ENCODE measurements at regions of chr11 and their contacts with region 1.

Region 1: DNA sequence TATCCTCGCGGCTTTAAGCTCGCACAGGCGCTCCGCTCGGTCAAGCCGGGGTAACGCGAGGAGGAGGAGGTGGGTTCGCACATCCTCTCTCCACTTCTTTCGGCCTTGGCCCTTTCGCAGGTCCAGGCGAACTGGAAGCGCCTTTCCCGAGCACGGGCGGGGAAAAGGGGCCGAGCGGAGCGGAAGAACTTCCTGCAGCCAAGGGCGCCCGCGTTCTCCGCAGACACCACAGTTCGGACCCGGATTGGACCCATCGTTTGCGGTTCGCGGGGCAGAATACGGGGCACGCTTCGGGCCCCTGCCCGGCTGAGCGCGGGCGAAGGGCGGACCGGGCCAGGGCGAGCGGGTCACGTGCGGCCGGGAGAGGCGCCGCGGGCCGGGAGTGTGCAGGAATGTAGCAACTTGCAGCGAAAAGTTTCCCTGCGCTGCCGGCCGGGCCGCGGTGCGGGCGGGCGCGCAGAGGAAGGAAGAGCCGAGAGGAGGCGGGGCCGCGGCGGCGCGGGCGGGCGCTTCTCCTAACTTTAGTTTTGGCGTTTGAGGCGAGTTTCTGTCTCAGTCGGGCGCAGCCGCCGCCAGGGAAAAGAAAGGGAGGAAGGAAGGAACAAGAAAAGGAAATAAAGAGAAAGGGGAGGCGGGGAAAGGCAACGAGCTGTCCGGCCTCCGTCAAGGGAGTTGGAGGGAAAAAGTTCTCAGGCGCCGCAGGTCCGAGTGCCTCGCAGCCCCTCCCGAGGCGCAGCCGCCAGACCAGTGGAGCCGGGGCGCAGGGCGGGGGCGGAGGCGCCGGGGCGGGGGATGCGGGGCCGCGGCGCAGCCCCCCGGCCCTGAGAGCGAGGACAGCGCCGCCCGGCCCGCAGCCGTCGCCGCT is at the start of gene YAP1:
- DNase-seq: peak; percentile 33 to 94
- H3K4me3 ChIP-seq: peak within 1 kb of the TSS; percentile 89
- H3K27ac ChIP-seq: peak within 1 kb of the TSS; percentile 99 to 100
- H3K4me1 ChIP-seq: peaks cover 0 to 10% of the 10 kb centered on the region in 2 donors
- H3K27me3 ChIP-seq: no peaks in the 10 kb centered on the region
- CTCF ChIP-seq: no peak
- total RNA-seq, gene YAP1: 516 TPM

Region 2: GRCh38 chr11:101860696-101861427 is 249.3 kb before region 1 on chr11:
- intact Hi-C with region 1: loop called (anchors 10 kb)
- DNase-seq: peak in 1 of 2 donors; percentile 64
- H3K4me3 ChIP-seq: no peak overlapping the region
- H3K27ac ChIP-seq: no peak overlapping the region
- H3K4me1 ChIP-seq: no peaks in the 10 kb centered on the region
- H3K27me3 ChIP-seq: no peaks in the 10 kb centered on the region
- CTCF ChIP-seq: peak; percentile 66 to 78 (median 68)

Region 3: GRCh38 chr11:102047305-102047924 is 62.7 kb before region 1 on chr11 and contains the start of gene CFAP300:
- intact Hi-C with region 1: loop called (anchors 2 kb)
- DNase-seq: peak; percentile 67 to 95
- H3K4me3 ChIP-seq: peak within 1 kb of the TSS; percentile 59 to 78
- H3K27ac ChIP-seq: peak within 1 kb of the TSS; percentile 81 to 90
- H3K4me1 ChIP-seq: peaks cover 0 to 4% of the 10 kb centered on the region in 2 donors
- H3K27me3 ChIP-seq: no peaks in the 10 kb centered on the region
- CTCF ChIP-seq: no peak
- total RNA-seq, gene CFAP300: not detected

Region 4: GRCh38 chr11:102120437-102120951 is 10.4 kb after region 1 on chr11:
- intact Hi-C with region 1: no loop called
- DNase-seq: no peak
- H3K4me3 ChIP-seq: peak overlapping the region in 1 of 2 donors; percentile 19
- H3K27ac ChIP-seq: peak overlapping the region; percentile 21 to 47
- H3K4me1 ChIP-seq: peaks cover 5 to 38% of the 10 kb centered on the region in 2 donors
- H3K27me3 ChIP-seq: no peaks in the 10 kb centered on the region
- CTCF ChIP-seq: no peak

Region 5: GRCh38 chr11:102157219-102157618 is 47.1 kb after region 1 on chr11:
- intact Hi-C with region 1: loop called (anchors 5 kb)
- DNase-seq: peak in 1 of 2 donors; percentile 83
- H3K4me3 ChIP-seq: no peak overlapping the region
- H3K27ac ChIP-seq: peak overlapping the region in 1 of 2 donors; percentile 0
- H3K4me1 ChIP-seq: peaks cover 0 to 59% of the 10 kb centered on the region in 2 donors
- H3K27me3 ChIP-seq: no peaks in the 10 kb centered on the region
- CTCF ChIP-seq: no peak

Region 6: DNA sequence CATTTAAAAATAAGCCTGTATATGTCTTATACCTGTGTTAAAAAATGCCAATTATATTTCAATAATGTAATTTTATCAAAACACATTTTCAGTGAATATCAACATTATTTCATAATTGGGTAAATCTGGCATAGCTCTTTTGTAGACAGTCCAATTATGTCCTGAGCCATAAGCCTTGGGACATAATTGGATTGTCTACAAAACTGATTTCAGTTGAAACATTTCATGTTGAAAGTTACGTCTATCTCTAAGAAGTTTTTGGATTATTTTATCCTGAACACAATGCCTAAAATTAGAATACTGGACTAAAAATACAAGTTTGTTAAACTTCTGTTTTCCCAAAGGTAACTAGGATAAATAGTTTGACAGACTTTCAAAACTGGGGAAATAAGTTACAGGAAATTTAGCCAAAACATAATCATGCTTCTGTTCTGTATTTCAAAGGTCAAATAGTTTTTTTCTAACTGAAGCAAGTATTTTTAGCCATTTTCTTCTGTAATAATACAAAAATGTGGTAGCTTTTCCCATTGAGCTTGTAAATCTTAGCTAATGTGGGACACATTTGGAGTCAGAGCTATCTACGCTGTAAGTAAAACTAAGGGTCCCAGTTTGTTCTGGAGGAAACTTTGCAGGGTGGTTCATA is 106.4 kb after region 1 on chr11:
- intact Hi-C with region 1: loop called (anchors 2 kb)
- DNase-seq: no peak
- H3K4me3 ChIP-seq: no peak overlapping the region
- H3K27ac ChIP-seq: peak overlapping the region; percentile 89 to 91
- H3K4me1 ChIP-seq: peaks cover 6 to 47% of the 10 kb centered on the region in 2 donors
- H3K27me3 ChIP-seq: no peaks in the 10 kb centered on the region
- CTCF ChIP-seq: no peak

Region 7: GRCh38 chr11:102287964-102288724 is 178.0 kb after region 1 on chr11:
- intact Hi-C with region 1: loop called (anchors 2 kb)
- DNase-seq: peak in 1 of 2 donors; percentile 72
- H3K4me3 ChIP-seq: peak overlapping the region; percentile 30 to 54
- H3K27ac ChIP-seq: peak overlapping the region in 1 of 2 donors; percentile 41
- H3K4me1 ChIP-seq: peaks cover 11 to 21% of the 10 kb centered on the region in 2 donors
- H3K27me3 ChIP-seq: no peaks in the 10 kb centered on the region
- CTCF ChIP-seq: peak; percentile 54 to 77 (median 75)